ENCODE measurements at regions of chr22 and their contacts with region 1.

Region 1: DNA sequence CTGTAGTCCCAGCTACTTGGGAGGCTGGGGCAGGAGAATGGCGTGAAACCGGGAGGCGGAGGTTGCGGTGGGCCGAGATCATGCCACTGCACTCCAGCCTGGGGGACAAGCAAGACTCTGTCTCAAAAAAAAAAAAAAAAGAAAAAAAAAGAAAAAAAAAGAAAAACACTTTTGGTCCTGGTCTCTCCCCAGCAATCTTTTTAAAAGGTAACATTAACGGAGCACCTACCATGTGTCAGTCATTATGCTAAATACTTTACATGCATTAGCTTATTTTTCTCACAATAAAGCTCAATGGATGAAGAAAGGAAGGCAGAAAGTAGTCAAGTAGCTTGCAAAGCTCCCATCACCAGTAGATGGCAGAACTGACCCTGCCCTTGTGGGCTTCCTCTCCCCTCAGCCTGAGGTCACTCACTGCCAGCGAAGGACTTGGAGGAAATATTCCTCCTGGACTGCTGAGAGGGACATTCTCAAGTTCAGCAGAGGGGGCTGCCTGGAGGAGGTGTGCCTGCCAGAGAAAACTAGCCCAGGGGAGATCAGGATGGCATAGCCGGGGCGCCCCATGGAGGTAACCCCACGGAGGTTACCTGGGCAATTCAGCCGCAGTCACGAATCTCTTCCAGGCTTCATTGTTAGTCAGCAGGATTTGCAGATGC is 15.5 kb downstream of the APOL3 start:
- DNase-seq: peak; percentile 77
- H3K4me3 ChIP-seq: no peak overlapping the region
- H3K27ac ChIP-seq: no peak overlapping the region
- H3K4me1 ChIP-seq: no peaks in the 10 kb centered on the region
- H3K27me3 ChIP-seq: peaks cover 0 to 2% of the 10 kb centered on the region in 2 experiments
- CTCF ChIP-seq: peak; percentile 80 to 83
- POLR2A ChIP-seq: no peak

Region 2: DNA sequence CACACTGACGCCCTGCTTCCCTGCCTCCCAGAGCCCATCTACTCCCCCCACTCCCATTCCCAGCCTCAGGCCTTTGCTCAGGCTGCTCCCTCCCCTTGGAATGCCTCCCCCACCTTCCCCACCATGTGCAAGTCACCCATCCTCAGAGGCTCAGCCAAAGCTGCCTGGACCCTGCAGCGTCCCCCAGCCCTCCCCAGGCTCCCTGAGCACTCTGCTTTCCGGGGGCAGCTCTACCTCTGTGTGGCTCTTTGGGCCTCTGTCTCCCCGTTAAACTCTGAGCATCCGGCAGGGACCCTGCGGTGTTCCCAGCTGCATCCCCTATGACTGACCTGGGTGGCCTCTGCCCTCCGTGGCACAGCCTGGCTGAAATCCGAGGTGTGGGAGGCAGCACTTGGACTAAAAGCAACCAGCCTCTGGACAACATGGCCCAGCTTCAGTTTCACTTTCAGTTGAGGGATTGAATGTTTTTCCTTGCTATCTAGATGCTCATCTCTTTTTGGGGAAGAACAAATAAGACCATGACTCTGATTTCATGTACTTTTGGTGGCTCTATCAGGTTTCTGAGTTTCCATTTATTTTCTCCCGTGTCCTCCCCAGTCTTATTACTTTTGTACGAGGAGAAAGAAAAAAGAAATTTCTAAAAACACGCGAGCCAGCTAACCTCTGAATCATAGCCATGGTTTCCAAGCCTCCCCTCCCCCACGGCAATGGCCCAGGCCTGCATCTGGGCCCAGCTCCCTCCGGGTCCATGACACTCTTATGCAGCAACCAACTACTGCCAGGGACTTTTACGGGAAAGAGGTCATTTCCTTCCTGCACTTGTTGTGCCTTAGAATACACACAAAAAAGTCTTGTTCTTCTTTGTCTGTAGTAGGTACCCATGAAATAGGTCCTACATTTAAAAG is 11.8 kb after region 1 on chr22:
- CTCF ChIA-PET with region 1: interaction called, 26 read pairs
- POLR2A ChIA-PET with region 1: no interaction called
- dilution Hi-C with region 1: no loop called
- intact Hi-C with region 1: no loop called
- DNase-seq: peak; percentile 98
- H3K4me3 ChIP-seq: peak overlapping the region; percentile 14 to 66 (median 23)
- H3K27ac ChIP-seq: peak overlapping the region; percentile 98
- H3K4me1 ChIP-seq: peaks cover 41% of the 10 kb centered on the region
- H3K27me3 ChIP-seq: no peaks in the 10 kb centered on the region
- CTCF ChIP-seq: no peak
- POLR2A ChIP-seq: peak; percentile 55

Region 3: DNA sequence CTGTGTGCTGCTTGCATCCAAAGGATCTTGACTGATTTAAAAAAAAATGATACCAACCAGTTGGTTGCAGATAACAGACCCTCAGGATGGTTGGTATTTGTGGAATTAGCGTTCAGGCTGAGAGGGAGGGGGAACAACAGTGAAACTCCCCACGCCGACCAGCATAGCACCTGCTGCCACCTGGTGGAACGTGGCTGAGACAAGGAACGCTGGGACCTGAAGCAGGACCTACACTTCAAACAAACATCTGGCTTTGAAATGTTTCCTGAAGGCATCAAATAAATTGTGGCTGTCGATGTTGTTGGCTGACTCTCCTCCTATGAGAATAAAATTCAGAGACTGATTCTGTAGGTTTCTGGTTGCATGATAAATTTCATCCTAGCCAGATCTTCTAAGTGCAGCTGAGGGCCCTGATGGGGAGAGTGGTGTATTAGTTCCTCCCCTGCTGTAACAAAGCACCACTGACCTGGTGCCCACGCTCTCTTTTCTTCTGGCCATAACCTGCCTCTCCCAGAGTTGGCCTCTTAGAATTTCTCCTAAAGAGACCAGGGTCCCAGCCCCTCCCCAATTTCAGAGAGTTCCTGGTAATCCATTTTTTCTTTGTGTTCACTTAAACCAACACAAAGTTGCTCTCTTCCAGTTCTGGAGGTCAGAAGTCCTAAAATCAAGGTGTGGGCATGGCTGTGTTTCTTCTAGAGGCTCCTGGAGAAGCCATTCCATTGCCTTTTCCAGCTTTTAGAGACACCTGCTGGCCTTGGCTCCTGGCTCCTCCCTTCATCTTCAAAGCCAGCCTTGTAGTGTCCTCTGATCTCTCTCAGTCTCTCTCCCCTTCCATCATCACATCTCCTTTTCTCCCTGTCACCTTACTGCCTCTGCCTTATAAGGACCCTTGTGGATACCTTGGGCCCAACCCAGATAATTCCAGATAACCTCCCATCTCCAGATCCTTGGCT is 77.1 kb after region 1 on chr22:
- CTCF ChIA-PET with region 1: interaction called, 5 read pairs
- POLR2A ChIA-PET with region 1: no interaction called
- dilution Hi-C with region 1: no loop called
- intact Hi-C with region 1: loop called (anchors 1 kb)
- DNase-seq: peak; percentile 60
- H3K4me3 ChIP-seq: no peak overlapping the region
- H3K27ac ChIP-seq: no peak overlapping the region
- H3K4me1 ChIP-seq: peaks cover 4% of the 10 kb centered on the region
- H3K27me3 ChIP-seq: peaks cover 9 to 10% of the 10 kb centered on the region in 2 experiments
- CTCF ChIP-seq: peak; percentile 69 to 78
- POLR2A ChIP-seq: no peak

Measured in endothelial cell of umbilical vein (primary cell).